ENCODE measurements at regions of chr2 and their contacts with region 1.

Region 1: DNA sequence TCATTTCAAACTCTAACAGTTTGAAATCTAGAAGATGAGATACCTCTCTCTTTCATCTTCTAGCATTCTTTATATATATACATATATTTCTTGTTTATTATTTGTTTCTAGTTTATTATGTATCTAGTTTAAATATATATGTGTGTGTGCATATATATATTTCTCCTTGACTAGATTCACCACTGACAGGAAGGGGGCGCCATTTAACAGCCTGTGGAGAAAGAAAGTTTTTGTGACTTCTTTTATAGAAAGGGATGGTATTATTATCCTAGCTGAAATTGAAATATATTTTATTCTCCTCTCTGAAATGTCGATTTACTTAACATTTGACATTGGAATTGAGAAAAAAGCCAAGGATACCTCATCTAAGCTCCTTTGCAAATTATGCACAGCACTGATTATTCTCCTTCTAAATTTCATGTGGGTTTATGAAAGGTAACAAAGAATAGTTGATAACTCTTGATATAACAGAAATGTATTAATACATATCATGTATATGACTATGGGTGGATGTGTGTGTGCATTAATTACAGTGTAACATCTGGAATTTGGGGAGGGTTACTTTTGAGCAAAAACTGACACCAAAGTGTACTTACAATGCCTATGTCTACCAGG is 160.7 kb upstream of the NT5C1B start:
- DNase-seq: peak in 1 of 2 donors; percentile 67
- ATAC-seq: peak in 2 of 8 donors; percentile 37 to 38
- H3K4me3 ChIP-seq: no peak overlapping the region
- H3K27ac ChIP-seq: no peak overlapping the region
- H3K4me1 ChIP-seq: peaks cover 0 to 15% (median 0%) of the 10 kb centered on the region in 9 donors
- H3K27me3 ChIP-seq: no peaks in the 10 kb centered on the region
- CTCF ChIP-seq: peak; percentile 55 to 87 (median 80)

Region 2: GRCh38 chr2:18829251-18829902 is 79.4 kb after region 1 on chr2:
- intact Hi-C with region 1: no loop called
- DNase-seq: no peak
- ATAC-seq: peak in 1 of 8 donors; percentile 24
- H3K4me3 ChIP-seq: no peak overlapping the region
- H3K27ac ChIP-seq: peak overlapping the region in 3 of 10 donors; percentile 2 to 31 (median 21)
- H3K4me1 ChIP-seq: peaks cover 5 to 44% (median 28%) of the 10 kb centered on the region in 9 donors
- H3K27me3 ChIP-seq: no peaks in the 10 kb centered on the region
- CTCF ChIP-seq: no peak

Region 3: DNA sequence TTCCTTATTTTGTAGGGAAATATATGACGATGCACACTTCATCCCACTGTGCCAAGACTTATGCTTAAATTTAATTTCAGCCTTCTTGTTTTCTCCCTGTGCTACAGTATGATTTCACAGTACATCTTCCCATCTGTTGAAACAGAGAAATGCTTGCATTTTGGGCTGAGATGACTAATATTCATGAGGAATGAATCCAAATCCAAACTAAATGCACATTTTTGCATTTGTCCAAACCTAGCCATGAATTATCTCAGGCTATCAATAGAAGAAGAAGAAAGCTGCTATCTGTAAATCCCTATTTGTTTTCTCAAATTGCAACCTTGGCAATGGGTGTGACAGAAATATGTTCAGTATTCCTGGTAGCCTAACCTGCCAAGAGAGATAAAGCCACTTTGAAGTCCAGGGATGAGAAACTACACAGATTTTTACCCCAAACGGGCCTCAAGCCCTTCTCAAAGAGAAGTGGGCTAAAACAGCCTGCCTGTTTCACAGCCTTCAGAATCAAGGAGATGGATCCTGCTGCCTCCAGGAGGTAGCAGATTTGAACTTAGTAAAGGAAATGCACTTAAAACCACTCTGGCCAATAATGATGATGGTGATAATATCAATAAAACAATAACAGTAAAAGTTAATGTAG is 146.2 kb after region 1 on chr2:
- intact Hi-C with region 1: no loop called
- DNase-seq: no peak
- ATAC-seq: no peak
- H3K4me3 ChIP-seq: no peak overlapping the region
- H3K27ac ChIP-seq: no peak overlapping the region
- H3K4me1 ChIP-seq: peaks cover 0 to 24% (median 12%) of the 10 kb centered on the region in 9 donors
- H3K27me3 ChIP-seq: no peaks in the 10 kb centered on the region
- CTCF ChIP-seq: no peak

Region 4: DNA sequence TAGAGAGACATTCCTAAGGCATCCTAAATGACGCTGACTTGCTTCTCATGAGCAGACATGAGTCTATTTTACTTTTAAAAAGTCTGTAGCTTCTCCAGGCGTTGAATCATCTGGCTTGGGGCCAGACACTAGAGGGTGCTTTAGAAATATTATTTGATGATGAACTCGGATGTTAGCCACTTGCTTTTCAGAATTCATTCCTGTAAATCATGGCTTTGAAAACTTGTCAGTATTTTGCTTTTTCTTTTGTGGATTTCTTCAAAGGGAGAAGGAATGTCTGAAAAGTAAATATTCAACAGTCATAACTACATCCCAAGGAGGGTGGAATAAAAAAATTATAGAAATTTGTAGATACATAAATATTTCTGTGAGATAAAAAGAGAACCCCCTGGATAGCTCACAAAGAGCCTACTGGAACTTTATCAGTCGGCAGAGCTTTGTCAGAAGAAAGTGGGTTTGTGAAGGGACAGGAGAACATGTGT is 237.6 kb after region 1 on chr2:
- intact Hi-C with region 1: loop called in 1 of 10 experiments (anchors 10 kb)
- DNase-seq: peak; percentile 29 to 81
- ATAC-seq: peak in 5 of 8 donors; percentile 58 to 68 (median 66)
- H3K4me3 ChIP-seq: no peak overlapping the region
- H3K27ac ChIP-seq: no peak overlapping the region
- H3K4me1 ChIP-seq: peaks cover 0 to 31% (median 17%) of the 10 kb centered on the region in 9 donors
- H3K27me3 ChIP-seq: no peaks in the 10 kb centered on the region
- CTCF ChIP-seq: peak in 8 of 9 donors; percentile 7 to 59 (median 34)

Region 5: DNA sequence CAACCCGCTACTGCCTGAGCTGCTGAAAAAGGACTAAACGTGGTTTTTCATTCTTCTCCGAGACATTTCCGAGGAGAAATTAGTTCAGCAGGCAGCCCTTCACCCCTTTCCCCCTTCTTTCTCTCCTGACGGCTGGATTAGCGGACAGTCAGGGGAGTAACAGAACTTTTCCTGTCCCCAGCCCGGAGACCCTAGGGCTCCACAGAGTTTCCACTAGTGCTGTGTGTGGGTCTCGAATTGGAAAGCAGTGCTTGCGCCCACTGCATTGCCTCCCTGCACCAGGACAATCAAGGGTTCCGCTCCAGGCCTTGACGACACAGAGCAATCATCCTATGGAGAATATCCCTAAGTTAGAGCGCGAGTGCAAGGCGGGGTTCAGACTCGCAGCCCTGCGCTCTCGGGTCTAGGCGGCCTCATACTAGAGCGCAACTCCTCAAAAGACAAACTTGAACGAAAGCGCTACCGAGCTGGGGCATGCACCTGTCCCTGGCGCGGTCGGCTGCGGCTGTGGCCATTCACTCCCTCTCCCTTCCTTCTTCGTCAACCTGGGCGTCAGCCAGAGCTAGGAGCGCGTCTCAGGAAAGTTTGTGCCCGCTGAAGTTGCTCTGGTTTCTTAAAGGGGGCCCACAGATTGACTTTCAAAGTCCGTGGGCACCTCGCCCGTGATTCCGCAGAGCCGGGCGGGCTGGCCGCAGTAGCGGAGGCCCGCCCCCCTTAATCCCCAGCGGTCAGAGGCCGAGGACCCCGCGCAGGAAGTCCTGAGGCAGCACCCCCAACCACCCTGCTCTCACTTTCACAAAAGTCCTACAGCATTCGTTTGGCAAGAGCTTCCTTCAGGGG is 607.6 kb after region 1 on chr2:
- intact Hi-C with region 1: loop called (anchors 2 to 10 kb)
- DNase-seq: no peak
- ATAC-seq: peak; percentile 4 to 51 (median 26)
- H3K4me3 ChIP-seq: peak overlapping the region; percentile 58 to 84 (median 68)
- H3K27ac ChIP-seq: peak overlapping the region in 9 of 10 donors; percentile 24 to 82 (median 73)
- H3K4me1 ChIP-seq: peaks cover 0 to 47% (median 34%) of the 10 kb centered on the region in 9 donors
- H3K27me3 ChIP-seq: peaks cover 0 to 94% (median 65%) of the 10 kb centered on the region in 7 donors
- CTCF ChIP-seq: no peak

Measured in heart right ventricle (tissue), 16 donors.